ENCODE measurements at regions of chr17 and their contacts with region 1.

Region 1: DNA sequence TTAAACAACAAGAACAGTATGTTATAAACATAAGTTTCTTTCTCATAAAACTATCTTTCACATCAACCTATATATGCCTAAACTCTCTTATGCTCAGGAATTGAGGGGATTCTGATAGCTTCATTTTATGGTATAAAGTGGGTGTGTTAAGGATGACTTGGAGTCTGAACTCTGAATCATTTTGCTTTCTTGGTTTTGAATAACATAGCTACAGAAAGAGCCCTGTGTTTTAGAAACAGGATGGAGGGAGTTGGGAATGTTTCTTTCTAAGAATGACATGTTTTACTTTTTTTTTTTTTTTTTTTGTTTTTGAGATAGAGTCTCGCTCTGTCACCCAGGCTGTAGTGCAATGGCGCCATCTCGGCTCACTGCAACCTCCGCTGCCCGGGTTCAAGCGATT is 50.1 kb downstream of the RHOT1 start:
- DNase-seq: no peak
- H3K4me3 ChIP-seq: no peak overlapping the region
- CTCF ChIP-seq: no peak

Region 2: GRCh38 chr17:32206861-32207260 is 14.5 kb after region 1 on chr17:
- CTCF ChIA-PET with region 1: interaction called, 11 read pairs
- POLR2A ChIA-PET with region 1: no interaction called
- DNase-seq: peak; percentile 45
- H3K4me3 ChIP-seq: no peak overlapping the region
- CTCF ChIP-seq: no peak

Measured in AG04449 (cell line).